BJ (cell line): ENCODE measurements at regions of chr11 and their contacts with region 1.

Region 1: GRCh38 chr11:70815485-70815861 is 417.1 kb downstream of the CTTN start:
- DNase-seq: no peak
- H3K4me3 ChIP-seq: no peak overlapping the region
- H3K27me3 ChIP-seq: no peaks in the 10 kb centered on the region
- CTCF ChIP-seq: no peak

Region 2: GRCh38 chr11:70804139-70804837 is 11.2 kb before region 1 on chr11:
- CTCF ChIA-PET with region 1: interaction called, 13 read pairs
- POLR2A ChIA-PET with region 1: no interaction called
- DNase-seq: no peak
- H3K4me3 ChIP-seq: no peak overlapping the region
- H3K27me3 ChIP-seq: no peaks in the 10 kb centered on the region
- CTCF ChIP-seq: no peak